ENCODE measurements at regions of chr19 and their contacts with region 1.

Region 1: GRCh38 chr19:18588611-18589379 is at the start of gene REX1BD:
- H3K4me3 Mint-ChIP-seq: peak within 1 kb of the TSS; percentile 88
- H3K27ac Mint-ChIP-seq: peak within 1 kb of the TSS; percentile 91
- H3K4me1 Mint-ChIP-seq: peaks cover 62% of the 10 kb centered on the region
- H3K27me3 Mint-ChIP-seq: no peaks in the 10 kb centered on the region

Region 2: DNA sequence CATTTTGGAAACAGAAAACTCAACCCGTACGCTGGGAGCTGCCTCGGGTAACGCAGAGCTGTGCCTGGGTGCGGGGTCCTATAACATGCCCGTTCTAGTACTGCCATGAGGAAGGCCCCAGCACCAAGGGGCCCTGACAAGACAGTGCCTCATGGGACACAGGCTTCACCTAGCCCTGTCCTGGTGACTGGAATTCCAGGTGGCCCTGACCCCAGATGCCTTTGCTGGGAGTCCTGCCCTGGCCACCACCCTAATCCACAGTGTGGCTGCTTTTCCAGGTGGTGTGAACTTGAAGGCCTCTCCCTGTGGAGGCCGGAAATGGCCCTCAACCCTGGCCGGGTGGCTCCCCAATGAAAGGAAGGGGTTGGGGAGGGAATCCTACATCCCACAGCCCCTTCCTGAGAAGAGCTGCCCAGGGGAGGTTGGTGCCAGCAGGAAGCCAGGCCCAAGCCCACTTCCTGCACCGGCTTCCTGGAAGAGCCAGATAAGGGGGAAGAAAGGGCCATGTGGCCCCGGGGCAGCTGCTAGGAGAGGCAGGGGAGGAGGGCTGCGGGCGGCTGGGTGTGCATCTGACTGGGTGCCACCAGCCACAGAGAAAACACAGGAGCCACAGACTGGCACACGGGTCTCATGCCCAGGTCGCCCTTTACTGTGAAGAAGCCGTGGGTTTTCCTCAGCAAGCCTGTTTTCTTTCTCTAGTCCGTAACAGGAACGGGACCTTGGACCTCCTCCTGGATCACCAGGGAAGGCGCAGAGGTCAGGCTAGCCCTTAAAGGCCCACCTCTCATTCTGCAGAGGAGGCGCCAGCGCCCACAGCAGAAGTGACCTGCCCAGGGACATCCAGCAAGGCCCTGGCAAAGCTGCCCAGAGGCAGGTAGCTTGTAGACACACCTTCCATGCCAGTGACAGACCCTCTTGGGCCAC is 270.6 kb before region 1 on chr19:
- intact Hi-C with region 1: no loop called
- H3K4me3 Mint-ChIP-seq: peak overlapping the region; percentile 68
- H3K27ac Mint-ChIP-seq: peak overlapping the region; percentile 96
- H3K4me1 Mint-ChIP-seq: peaks cover 53% of the 10 kb centered on the region
- H3K27me3 Mint-ChIP-seq: no peaks in the 10 kb centered on the region

Region 3: DNA sequence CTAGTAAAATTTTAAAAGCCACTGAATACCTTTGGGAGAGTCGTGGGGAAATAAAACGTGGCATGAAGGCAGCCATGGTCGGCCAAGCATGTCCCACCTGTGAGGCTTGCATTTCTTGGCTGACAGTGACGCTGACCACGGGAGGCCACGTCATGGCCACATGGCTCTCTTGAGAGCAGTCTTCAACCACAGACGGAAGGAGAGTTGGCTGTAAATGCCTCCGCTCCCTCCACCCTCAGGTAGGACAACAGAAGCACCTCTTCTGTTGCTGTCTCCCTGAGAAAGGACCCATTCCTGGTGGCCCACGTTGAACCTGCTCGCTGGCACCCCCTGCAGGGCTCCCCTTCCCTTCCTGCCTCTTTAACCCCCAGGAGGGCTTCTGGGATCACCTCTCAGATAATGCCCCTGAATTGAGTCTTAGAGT is 180.7 kb before region 1 on chr19:
- intact Hi-C with region 1: no loop called
- H3K4me3 Mint-ChIP-seq: no peak overlapping the region
- H3K27ac Mint-ChIP-seq: no peak overlapping the region
- H3K4me1 Mint-ChIP-seq: peaks cover 27% of the 10 kb centered on the region
- H3K27me3 Mint-ChIP-seq: peaks cover 14% of the 10 kb centered on the region

Region 4: GRCh38 chr19:18469069-18469846 is 119.5 kb before region 1 on chr19:
- intact Hi-C with region 1: loop called (anchors 5 kb)
- H3K4me3 Mint-ChIP-seq: no peak overlapping the region
- H3K27ac Mint-ChIP-seq: peak overlapping the region; percentile 38
- H3K4me1 Mint-ChIP-seq: peaks cover 79% of the 10 kb centered on the region
- H3K27me3 Mint-ChIP-seq: no peaks in the 10 kb centered on the region

Region 5: GRCh38 chr19:18571564-18572300 is 17.1 kb before region 1 on chr19 and contains the start of gene UBA52:
- intact Hi-C with region 1: loop called (anchors 2 kb)
- H3K4me3 Mint-ChIP-seq: peak within 1 kb of the TSS; percentile 78
- H3K27ac Mint-ChIP-seq: peak within 1 kb of the TSS; percentile 95
- H3K4me1 Mint-ChIP-seq: peaks cover 25% of the 10 kb centered on the region
- H3K27me3 Mint-ChIP-seq: no peaks in the 10 kb centered on the region

Region 6: DNA sequence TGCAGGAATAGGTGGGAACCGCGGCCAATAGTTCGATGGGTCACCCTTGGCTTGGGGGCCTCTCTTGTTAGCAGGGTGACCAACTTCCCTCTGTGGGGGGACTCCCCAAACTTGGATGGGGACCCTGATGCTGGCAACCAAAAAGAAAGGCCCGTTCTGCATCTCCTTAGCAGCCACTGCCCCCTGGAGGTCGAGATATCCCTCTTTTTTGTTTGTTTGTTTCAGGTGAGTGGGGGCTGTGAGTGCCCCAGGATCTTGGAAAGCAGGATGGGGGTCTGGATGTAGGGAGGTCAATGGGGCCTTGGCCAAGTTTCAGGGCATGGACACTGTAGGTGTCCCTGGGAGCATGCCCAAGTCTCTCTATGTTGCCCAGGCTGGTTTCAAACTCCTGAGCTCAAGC is 87.0 kb after region 1 on chr19:
- intact Hi-C with region 1: loop called (anchors 10 kb)
- H3K4me3 Mint-ChIP-seq: no peak overlapping the region
- H3K27ac Mint-ChIP-seq: no peak overlapping the region
- H3K4me1 Mint-ChIP-seq: peaks cover 28% of the 10 kb centered on the region
- H3K27me3 Mint-ChIP-seq: peaks cover 3% of the 10 kb centered on the region

Region 7: GRCh38 chr19:18846862-18847548 is 258.2 kb after region 1 on chr19:
- intact Hi-C with region 1: loop called (anchors 5 kb)
- H3K4me3 Mint-ChIP-seq: no peak overlapping the region
- H3K27ac Mint-ChIP-seq: peak overlapping the region; percentile 90
- H3K4me1 Mint-ChIP-seq: peaks cover 88% of the 10 kb centered on the region
- H3K27me3 Mint-ChIP-seq: no peaks in the 10 kb centered on the region